Left cardiac atrium (tissue), 4 donors: ENCODE measurements at regions of chr15 and their contacts with region 1.

Region 1: GRCh38 chr15:78709263-78709882 is 68.4 kb upstream of the CHRNB4 start:
- DNase-seq: peak; percentile 75
- ATAC-seq: peak; percentile 94 to 97

Region 2: GRCh38 chr15:78618490-78618934 is 90.9 kb before region 1 on chr15:
- intact Hi-C with region 1: loop called (anchors 1 to 5 kb)
- DNase-seq: peak; percentile 87
- ATAC-seq: peak; percentile 74 to 90

Region 3: DNA sequence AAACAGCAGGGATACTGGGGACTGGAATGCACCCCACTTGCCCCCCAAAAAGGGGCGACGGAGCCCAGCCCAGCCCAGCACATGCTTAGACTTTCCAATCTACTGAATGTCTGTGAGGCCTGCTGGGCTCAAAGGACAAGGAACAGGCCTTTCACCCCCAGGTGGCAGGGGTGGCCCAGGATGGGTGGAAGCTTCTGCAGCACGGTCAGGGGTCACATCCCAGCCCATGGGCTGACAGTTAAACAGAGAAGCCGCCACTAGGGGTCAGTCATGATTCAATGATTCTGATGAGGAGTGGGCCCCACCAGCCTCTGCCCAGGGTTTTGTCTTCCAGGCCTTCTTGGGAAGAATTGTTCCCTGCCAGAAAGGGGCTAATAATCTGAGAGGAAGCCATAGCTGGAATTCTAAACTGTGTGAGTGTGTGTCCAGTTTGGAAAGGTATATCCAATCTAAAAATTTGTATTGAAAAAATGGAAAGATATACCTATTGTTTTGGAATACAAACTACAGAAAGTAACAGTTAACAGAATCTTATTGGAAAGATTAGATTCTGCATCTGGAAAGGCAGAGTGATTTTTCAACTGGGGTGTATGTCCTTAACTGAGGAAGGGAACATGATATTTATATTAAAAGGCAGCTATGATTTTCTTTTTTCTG is 70.6 kb before region 1 on chr15:
- intact Hi-C with region 1: loop called (anchors 1 to 5 kb)
- DNase-seq: peak; percentile 52
- ATAC-seq: peak; percentile 50 to 62